ENCODE measurements at regions of chr3 and their contacts with region 1.

Region 1: DNA sequence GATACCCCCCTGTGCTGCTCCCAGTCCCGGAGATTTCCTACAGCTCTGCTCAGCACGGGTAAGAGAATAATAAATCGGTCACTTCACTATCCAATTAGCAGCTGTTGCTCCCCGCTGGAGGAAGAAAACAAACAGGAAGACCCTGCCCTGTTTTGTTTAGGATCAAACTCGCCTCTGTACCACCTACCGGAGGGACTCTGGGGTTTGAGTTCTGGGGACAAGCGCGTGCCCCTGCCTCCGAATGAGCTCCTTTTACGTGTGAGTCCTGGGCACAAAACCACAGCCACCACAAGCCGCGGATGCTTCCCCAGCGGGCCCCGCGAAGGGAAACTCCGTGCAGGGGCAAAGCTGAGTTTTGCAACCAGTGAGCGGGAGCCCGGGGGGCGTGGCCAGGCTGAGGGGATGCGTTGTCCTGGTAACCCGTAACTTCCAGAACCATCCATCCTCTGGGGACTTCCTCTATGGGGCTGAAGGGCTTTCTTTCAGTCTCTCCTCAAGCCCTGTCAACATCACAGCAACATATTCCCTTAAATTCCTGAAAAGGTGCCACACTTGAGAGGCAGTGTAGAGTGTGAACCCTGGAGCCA is 315.7 kb upstream of the PROK2 start:
- DNase-seq: peak; percentile 79
- H3K4me3 ChIP-seq: peak overlapping the region; percentile 62
- H3K27ac ChIP-seq: peak overlapping the region; percentile 43
- H3K4me1 ChIP-seq: peaks cover 75% of the 10 kb centered on the region
- CTCF ChIP-seq: no peak

Region 2: DNA sequence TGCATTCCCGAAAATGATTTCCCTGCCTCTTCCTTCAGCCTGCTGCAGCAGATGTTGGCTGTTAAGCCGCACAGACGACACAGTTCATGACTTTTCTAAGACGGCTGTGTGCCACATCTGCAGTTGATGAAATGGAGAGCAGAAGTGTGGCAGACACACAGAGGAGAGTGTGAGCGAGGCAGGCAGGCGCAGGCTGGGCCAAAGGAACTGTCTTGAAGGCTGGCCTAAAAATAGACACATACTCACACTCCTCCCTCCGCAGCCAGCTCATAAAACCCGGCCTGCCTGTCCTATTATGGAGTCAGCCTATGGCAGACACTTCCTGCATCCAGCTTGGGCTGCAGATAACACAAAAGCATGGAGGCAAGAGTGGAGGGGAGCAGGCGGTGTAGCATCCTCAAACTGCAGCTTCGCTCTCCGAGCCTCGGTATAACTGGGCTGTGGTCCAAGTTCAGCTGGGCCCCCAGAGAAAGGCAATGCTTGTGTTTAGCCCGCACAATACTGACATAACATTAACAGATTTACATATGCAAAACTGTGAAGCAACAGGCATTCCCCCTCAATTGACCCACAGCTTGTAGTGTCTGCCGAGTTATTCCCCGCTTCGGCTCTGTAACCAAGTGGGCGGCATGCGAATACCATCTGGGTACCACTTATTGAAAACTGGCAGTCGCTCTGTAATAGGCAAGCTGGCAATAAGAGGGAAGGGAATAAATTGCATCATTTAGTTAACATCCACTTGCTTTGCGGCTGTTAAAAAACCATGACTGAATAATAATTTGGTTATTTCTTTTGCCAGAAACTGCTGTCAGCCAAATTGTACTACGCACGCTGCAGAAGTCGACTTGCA is 557.9 kb before region 1 on chr3:
- CTCF ChIA-PET with region 1: no interaction called
- POLR2A ChIA-PET with region 1: no interaction called
- intact Hi-C with region 1: loop called (anchors 10 kb)
- DNase-seq: peak; percentile 90
- H3K4me3 ChIP-seq: peak overlapping the region; percentile 56
- H3K27ac ChIP-seq: peak overlapping the region; percentile 85
- H3K4me1 ChIP-seq: peaks cover 80% of the 10 kb centered on the region
- CTCF ChIP-seq: no peak

Region 3: DNA sequence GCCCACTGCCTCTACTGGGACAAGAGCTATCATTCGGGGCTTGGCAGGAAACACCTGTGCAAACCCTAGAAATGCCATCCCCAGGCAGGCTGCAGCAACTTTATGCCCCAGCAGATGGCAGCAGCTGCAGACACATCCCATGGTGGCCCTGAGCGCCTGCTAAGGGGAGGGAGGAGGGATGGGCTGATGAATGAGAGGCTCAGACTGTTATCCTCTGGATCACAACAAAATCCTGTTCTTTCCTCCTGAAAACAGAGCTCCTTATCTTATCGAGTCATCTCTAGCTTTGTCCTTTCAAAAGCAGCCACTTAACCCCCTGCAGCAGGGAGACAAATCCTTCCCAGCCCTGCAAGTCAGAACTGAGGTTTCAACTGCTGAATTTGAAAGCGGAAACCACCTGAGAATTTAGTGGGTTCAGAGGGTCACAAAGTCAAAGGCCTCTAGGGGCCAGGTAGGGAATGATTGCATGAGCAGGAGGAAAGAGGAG is 225.2 kb before region 1 on chr3:
- CTCF ChIA-PET with region 1: no interaction called
- POLR2A ChIA-PET with region 1: no interaction called
- intact Hi-C with region 1: loop called (anchors 5 kb)
- DNase-seq: peak; percentile 82
- H3K4me3 ChIP-seq: no peak overlapping the region
- H3K27ac ChIP-seq: no peak overlapping the region
- H3K4me1 ChIP-seq: peaks cover 4% of the 10 kb centered on the region
- CTCF ChIP-seq: peak; percentile 93

Region 4: DNA sequence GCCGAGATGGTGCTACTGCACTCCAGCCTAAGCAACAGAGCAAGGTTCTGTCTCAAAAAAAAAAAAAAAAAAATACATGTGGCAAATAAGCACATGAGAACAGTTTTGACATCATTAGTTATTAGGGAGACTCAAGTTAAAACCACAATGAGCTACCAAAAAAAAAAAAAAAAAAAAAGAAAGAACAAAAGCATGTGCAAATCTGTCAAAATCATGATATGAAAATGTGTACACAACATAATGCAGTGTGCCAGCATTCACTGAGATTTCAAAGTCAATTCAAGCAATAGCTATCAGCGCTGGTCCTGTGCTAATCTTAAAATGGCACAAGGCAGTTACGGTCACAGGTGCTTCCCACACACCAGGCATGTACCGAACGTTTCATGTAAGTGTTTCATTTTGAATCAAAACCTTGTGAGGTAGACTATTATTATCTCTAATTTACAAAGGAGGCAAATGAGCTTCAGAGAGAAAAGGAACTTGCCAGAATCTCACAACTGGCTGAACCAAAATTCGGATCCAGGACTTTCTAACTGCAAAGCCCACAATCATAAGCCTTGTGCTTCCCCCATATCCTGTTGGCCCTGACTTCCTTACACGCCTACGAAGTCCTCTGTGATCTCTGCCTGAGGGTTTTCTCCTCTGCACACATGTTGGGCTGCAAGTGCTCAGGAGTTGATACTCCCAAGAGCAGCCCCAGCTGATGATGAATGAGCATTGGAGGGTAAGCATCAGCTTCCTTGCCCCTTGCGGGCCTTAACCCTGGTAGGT is 115.7 kb before region 1 on chr3:
- CTCF ChIA-PET with region 1: interaction called, 4 read pairs
- POLR2A ChIA-PET with region 1: interaction called, 20 read pairs
- intact Hi-C with region 1: loop called (anchors 2 kb)
- DNase-seq: peak; percentile 87
- H3K4me3 ChIP-seq: peak overlapping the region; percentile 15
- H3K27ac ChIP-seq: peak overlapping the region; percentile 94
- H3K4me1 ChIP-seq: peaks cover 54% of the 10 kb centered on the region
- CTCF ChIP-seq: no peak

Region 5: DNA sequence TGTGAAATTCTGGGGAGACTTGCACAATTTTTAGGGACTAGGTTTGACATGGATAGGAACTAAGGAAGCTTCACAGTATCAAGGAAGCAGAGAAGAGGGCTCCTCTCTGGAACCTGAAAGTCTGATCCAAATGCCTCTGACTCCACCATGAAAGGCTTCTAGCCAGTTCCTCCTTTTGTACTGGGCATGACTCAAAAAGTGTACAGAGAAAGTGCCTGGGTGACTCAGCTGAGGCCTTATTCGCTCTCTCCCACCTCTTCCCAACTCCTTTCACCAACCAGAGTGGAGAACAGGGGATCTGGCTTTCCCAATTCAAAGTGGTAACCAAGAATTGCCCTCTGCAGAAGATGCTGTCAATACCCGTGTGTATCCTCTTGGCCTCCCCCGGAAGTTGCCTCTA is 27.1 kb after region 1 on chr3:
- CTCF ChIA-PET with region 1: no interaction called
- POLR2A ChIA-PET with region 1: interaction called, 10 read pairs
- intact Hi-C with region 1: no loop called
- DNase-seq: no peak
- H3K4me3 ChIP-seq: no peak overlapping the region
- H3K27ac ChIP-seq: no peak overlapping the region
- H3K4me1 ChIP-seq: peaks cover 5% of the 10 kb centered on the region
- CTCF ChIP-seq: no peak

Region 6: DNA sequence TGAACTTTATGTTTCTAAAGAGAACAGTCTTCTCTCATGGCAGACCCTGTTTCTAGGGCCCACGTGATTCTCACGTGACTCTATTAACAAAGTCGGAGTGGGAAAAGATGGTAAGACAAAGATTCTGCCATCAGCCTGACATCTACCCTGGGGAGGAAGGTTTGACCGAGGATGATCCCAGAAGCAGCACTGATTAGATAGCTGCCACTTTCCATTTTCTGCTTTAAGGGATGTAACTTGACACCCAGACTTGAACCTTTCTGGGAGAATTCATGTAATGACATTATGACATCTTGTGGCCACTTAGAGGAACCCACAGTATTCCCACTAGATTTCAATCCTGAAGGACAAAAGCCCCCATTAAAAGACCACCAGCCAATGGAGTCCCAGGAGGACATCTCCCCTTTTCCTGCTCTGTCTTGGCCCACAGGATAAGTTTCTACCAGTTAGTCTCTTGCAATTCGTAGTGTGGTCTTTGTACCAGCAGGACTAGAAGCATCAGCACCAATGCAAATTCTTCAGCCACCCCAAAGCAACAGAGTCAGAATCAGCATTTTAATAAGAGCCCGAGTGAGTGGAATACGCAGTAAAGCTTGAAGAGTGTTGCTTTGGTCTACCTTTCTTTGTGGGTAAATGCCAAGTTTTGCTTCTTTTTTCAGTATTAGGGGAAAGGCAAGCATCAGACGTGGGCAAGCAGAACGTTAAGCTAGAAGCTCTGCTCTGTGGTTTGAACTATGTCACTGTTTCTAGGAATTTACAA is 164.7 kb after region 1 on chr3:
- CTCF ChIA-PET with region 1: no interaction called
- POLR2A ChIA-PET with region 1: no interaction called
- intact Hi-C with region 1: loop called (anchors 10 kb)
- DNase-seq: peak; percentile 41
- H3K4me3 ChIP-seq: no peak overlapping the region
- H3K27ac ChIP-seq: no peak overlapping the region
- H3K4me1 ChIP-seq: no peaks in the 10 kb centered on the region
- CTCF ChIP-seq: peak; percentile 76

Region 7: GRCh38 chr3:72447059-72447946 is 346.6 kb after region 1 on chr3:
- CTCF ChIA-PET with region 1: no interaction called
- POLR2A ChIA-PET with region 1: no interaction called
- intact Hi-C with region 1: loop called (anchors 5 kb)
- DNase-seq: peak; percentile 92
- H3K4me3 ChIP-seq: peak overlapping the region; percentile 86
- H3K27ac ChIP-seq: no peak overlapping the region
- H3K4me1 ChIP-seq: peaks cover 42% of the 10 kb centered on the region
- CTCF ChIP-seq: no peak

Region 8: DNA sequence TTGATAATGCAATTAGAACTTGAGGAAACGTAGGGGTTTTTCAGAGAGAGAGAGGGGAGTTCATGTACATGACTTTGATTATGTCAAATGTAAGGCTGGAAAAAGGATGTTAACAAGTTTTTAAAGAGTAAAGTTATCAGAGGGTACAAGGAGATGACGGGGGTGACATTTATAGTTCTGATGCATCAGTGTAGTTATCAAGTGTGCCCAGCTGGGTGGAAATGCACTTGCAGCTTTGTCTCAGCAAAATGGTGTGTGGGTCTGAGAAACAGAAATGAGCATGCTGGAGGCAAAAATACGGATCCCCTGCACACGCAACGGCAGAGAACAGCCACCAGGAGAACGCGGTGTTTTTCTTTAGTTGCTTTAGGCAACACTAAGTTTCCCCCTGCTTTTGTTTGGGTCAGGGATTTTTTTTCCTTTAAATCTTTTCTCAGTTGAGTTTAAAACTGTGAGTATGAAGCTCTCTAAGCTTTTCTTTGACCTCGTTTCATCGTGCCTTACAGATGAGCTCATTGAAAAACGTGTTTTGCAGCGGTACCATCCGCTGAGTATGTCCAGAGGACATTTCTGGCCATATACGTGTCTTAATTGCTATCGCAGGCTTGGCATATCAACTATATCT is 1318.6 kb after region 1 on chr3:
- CTCF ChIA-PET with region 1: no interaction called
- POLR2A ChIA-PET with region 1: no interaction called
- intact Hi-C with region 1: no loop called
- DNase-seq: no peak
- H3K4me3 ChIP-seq: no peak overlapping the region
- H3K27ac ChIP-seq: no peak overlapping the region
- H3K4me1 ChIP-seq: no peaks in the 10 kb centered on the region
- CTCF ChIP-seq: no peak